ENCODE measurements at regions of chr10 and their contacts with region 1.

Region 1: GRCh38 chr10:82409671-82410070 is 534.7 kb downstream of the NRG3 start:
- DNase-seq: no peak
- H3K4me3 ChIP-seq: no peak overlapping the region
- H3K27ac ChIP-seq: no peak overlapping the region
- H3K4me1 ChIP-seq: no peaks in the 10 kb centered on the region
- H3K27me3 ChIP-seq: no peaks in the 10 kb centered on the region
- CTCF ChIP-seq: no peak

Region 2: DNA sequence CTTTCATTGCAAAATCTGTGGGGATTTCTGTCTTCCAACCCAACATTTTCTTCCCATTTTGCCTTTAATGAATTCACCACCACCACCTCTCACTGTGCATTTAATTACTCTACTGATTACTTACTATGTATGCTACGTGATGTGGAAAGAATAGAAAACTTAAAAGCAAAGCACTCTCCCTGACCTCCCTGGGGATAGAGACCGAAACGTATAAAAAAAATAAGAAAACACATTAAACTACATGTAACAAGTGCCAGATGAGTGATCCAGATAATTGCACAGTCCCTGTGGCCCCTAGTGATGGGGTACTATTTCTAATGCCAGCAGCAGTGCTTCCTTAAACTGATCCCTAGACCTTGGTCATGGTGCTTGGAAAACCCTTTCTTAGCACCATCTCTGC is 56.3 kb before region 1 on chr10:
- CTCF ChIA-PET with region 1: no interaction called
- POLR2A ChIA-PET with region 1: no interaction called
- intact Hi-C with region 1: loop called (anchors 5 kb)
- DNase-seq: no peak
- H3K4me3 ChIP-seq: no peak overlapping the region
- H3K27ac ChIP-seq: no peak overlapping the region
- H3K4me1 ChIP-seq: no peaks in the 10 kb centered on the region
- H3K27me3 ChIP-seq: no peaks in the 10 kb centered on the region
- CTCF ChIP-seq: no peak